Natural killer cell (primary cell): ENCODE measurements at regions of chr15 and their contacts with region 1.

Region 1: GRCh38 chr15:31488426-31489204 is 162.0 kb downstream of the KLF13 start:
- DNase-seq: peak; percentile 30 to 90
- ATAC-seq: peak; percentile 63 to 78 (median 65)
- H3K4me3 ChIP-seq: no peak overlapping the region
- H3K4me3 Mint-ChIP-seq: no peak overlapping the region
- H3K27ac ChIP-seq: no peak overlapping the region
- H3K27ac Mint-ChIP-seq: peak overlapping the region in 1 of 2 donors; percentile 56
- H3K4me1 ChIP-seq: peaks cover 31% of the 10 kb centered on the region
- H3K4me1 Mint-ChIP-seq: peaks cover 22 to 28% of the 10 kb centered on the region in 2 donors
- H3K27me3 ChIP-seq: no peaks in the 10 kb centered on the region
- H3K27me3 Mint-ChIP-seq: peaks cover 0 to 3% of the 10 kb centered on the region in 2 donors
- CTCF ChIP-seq: peak; percentile 91

Region 2: DNA sequence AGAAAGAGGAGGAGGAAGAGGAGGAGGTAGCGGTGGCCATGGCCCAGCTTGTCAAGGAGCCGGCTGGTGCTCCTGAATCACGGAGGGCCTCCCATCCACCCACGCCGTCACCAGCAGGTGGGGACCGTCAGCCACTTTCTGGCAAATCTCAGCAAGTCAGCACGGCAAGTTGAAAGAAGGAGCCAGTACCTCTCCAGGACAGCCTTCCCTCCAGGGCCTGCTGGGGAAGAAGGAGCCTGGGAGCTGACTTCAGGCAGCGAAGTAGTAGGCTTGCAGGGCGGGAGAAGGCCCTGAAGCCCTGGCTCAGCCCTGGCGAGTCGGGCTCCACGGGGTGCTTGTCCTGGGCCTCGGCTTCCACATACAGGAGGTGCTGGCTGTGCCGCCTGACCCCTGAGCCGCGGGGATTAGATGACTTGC is 287.9 kb before region 1 on chr15:
- intact Hi-C with region 1: loop called (anchors 2 kb)
- DNase-seq: peak; percentile 29 to 82
- ATAC-seq: peak; percentile 42 to 75 (median 58)
- H3K4me3 ChIP-seq: no peak overlapping the region
- H3K4me3 Mint-ChIP-seq: no peak overlapping the region
- H3K27ac ChIP-seq: no peak overlapping the region
- H3K27ac Mint-ChIP-seq: no peak overlapping the region
- H3K4me1 ChIP-seq: peaks cover 12% of the 10 kb centered on the region
- H3K4me1 Mint-ChIP-seq: peaks cover 6 to 19% of the 10 kb centered on the region in 2 donors
- H3K27me3 ChIP-seq: no peaks in the 10 kb centered on the region
- H3K27me3 Mint-ChIP-seq: peaks cover 0 to 8% of the 10 kb centered on the region in 2 donors
- CTCF ChIP-seq: no peak

Region 3: GRCh38 chr15:31215490-31216214 is 273.0 kb before region 1 on chr15:
- intact Hi-C with region 1: loop called (anchors 1 kb)
- DNase-seq: peak; percentile 68 to 84
- ATAC-seq: peak; percentile 82 to 87 (median 85)
- H3K4me3 ChIP-seq: peak overlapping the region; percentile 27
- H3K4me3 Mint-ChIP-seq: peak overlapping the region; percentile 87
- H3K27ac ChIP-seq: peak overlapping the region; percentile 87
- H3K27ac Mint-ChIP-seq: peak overlapping the region; percentile 66 to 87
- H3K4me1 ChIP-seq: peaks cover 23% of the 10 kb centered on the region
- H3K4me1 Mint-ChIP-seq: peaks cover 12 to 35% of the 10 kb centered on the region in 2 donors
- H3K27me3 ChIP-seq: no peaks in the 10 kb centered on the region
- H3K27me3 Mint-ChIP-seq: no peaks in the 10 kb centered on the region
- CTCF ChIP-seq: peak; percentile 78

Region 4: GRCh38 chr15:31265871-31266711 is 222.5 kb before region 1 on chr15:
- intact Hi-C with region 1: loop called (anchors 5 kb)
- DNase-seq: peak; percentile 47 to 88
- ATAC-seq: peak; percentile 74 to 83 (median 79)
- H3K4me3 ChIP-seq: no peak overlapping the region
- H3K4me3 Mint-ChIP-seq: peak overlapping the region; percentile 69
- H3K27ac ChIP-seq: peak overlapping the region; percentile 76
- H3K27ac Mint-ChIP-seq: peak overlapping the region; percentile 87 to 94
- H3K4me1 ChIP-seq: peaks cover 72% of the 10 kb centered on the region
- H3K4me1 Mint-ChIP-seq: peaks cover 58 to 78% of the 10 kb centered on the region in 2 donors
- H3K27me3 ChIP-seq: no peaks in the 10 kb centered on the region
- H3K27me3 Mint-ChIP-seq: no peaks in the 10 kb centered on the region
- CTCF ChIP-seq: no peak

Region 5: DNA sequence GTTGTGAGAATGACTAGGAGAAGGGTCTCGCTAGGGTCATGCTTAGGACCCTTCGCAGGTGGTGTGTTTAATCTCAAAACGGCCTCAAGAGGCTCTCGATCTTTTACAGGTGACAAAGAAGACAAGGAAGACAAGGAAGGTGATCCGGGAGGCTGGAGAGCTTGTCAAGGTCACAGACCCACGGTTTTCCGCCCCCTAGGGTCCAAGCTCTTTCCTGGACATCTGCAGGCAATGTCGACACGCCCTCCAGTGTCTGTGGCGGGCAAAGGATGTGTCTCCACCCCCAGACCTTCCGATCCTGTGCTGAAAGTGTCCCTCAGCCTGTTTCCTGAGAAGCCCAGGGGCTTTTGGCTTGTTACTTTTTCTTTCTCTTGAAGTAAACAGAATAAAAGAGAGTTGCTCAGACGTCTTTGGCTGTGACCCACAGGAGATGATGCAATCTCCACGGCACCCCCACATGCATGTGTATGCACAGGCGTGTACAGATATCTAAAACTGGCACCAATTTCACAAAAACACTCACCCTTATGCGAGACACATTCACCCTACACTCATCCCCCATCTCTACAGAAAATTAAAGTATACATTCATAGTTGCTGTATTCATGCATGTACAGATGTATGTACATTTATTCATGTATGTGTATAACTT is 53.2 kb before region 1 on chr15:
- intact Hi-C with region 1: loop called (anchors 5 kb)
- DNase-seq: peak; percentile 73 to 94
- ATAC-seq: peak; percentile 70 to 87 (median 75)
- H3K4me3 ChIP-seq: peak overlapping the region; percentile 41
- H3K4me3 Mint-ChIP-seq: peak overlapping the region; percentile 88
- H3K27ac ChIP-seq: peak overlapping the region; percentile 95
- H3K27ac Mint-ChIP-seq: peak overlapping the region; percentile 98 to 100
- H3K4me1 ChIP-seq: peaks cover 78% of the 10 kb centered on the region
- H3K4me1 Mint-ChIP-seq: peaks cover 59 to 77% of the 10 kb centered on the region in 2 donors
- H3K27me3 ChIP-seq: no peaks in the 10 kb centered on the region
- H3K27me3 Mint-ChIP-seq: no peaks in the 10 kb centered on the region
- CTCF ChIP-seq: no peak

Region 6: GRCh38 chr15:32698773-32699390 is 1210.3 kb after region 1 on chr15:
- intact Hi-C with region 1: no loop called
- DNase-seq: no peak
- ATAC-seq: no peak
- H3K4me3 ChIP-seq: no peak overlapping the region
- H3K4me3 Mint-ChIP-seq: no peak overlapping the region
- H3K27ac ChIP-seq: no peak overlapping the region
- H3K27ac Mint-ChIP-seq: no peak overlapping the region
- H3K4me1 ChIP-seq: no peaks in the 10 kb centered on the region
- H3K4me1 Mint-ChIP-seq: no peaks in the 10 kb centered on the region
- H3K27me3 ChIP-seq: no peaks in the 10 kb centered on the region
- H3K27me3 Mint-ChIP-seq: peaks cover 3 to 19% of the 10 kb centered on the region in 2 donors
- CTCF ChIP-seq: no peak